Activated CD8-positive, alpha-beta T cell treated with anti-CD3 and anti-CD28 coated beads for 36 hours (primary cell): ENCODE measurements at regions of chr1 and their contacts with region 1.

Region 1: DNA sequence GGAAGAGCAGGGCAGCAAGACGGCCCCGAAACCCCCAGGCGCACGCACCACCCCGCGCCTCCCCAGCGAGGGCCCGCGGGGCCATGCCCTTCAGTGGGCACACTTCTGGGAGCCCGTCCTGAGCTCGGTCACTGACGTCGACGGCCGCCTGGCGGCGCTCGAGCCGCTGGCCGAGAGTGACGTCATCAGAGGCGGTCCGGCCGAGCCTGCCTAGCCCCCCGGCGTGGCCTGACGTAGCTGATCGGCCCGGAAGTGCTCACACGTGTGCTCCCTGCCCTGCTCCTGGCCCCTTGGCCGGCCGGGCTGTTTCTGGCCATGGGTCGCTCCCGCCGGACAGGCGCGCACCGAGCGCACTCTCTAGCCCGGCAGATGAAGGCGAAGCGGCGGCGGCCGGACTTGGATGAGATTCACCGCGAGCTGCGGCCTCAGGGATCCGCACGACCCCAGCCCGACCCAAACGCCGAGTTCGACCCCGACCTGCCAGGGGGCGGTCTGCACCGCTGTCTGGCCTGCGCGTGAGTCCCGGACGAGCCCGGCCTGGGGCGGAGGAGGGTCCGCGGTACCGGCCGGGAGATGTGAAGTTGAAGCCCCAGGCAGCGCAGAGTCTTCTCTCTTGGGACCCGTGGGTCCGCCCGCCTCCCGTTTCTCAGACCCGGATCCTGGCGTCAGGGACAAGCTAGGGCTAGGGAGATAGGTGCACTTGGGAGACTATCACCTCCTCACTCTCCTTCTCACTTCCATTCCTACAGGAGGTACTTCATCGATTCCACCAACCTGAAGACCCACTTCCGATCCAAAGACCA is at the start of gene ZNF593:
- DNase-seq: peak; percentile 92
- ATAC-seq: peak; percentile 97
- H3K4me3 Mint-ChIP-seq: peak within 1 kb of the TSS; percentile 91
- H3K27ac Mint-ChIP-seq: peak within 1 kb of the TSS; percentile 90
- H3K4me1 Mint-ChIP-seq: peaks cover 11% of the 10 kb centered on the region
- H3K27me3 Mint-ChIP-seq: peaks cover under 1% of the 10 kb centered on the region
- CTCF ChIP-seq: peak; percentile 84
- total RNA-seq, gene ZNF593: 40.9 to 41.1 TPM

Region 2: GRCh38 chr1:26021647-26022403 is 148.0 kb before region 1 on chr1 and contains the start of gene EXTL1:
- CTCF ChIA-PET with region 1: no interaction called
- POLR2A ChIA-PET with region 1: no interaction called
- intact Hi-C with region 1: no loop called
- DNase-seq: no peak
- ATAC-seq: no peak
- H3K4me3 Mint-ChIP-seq: no peak within 1 kb of the TSS
- H3K27ac Mint-ChIP-seq: no peak within 1 kb of the TSS
- H3K4me1 Mint-ChIP-seq: peaks cover 13% of the 10 kb centered on the region
- H3K27me3 Mint-ChIP-seq: no peaks in the 10 kb centered on the region
- CTCF ChIP-seq: no peak
- total RNA-seq, gene EXTL1: not detected

Region 3: DNA sequence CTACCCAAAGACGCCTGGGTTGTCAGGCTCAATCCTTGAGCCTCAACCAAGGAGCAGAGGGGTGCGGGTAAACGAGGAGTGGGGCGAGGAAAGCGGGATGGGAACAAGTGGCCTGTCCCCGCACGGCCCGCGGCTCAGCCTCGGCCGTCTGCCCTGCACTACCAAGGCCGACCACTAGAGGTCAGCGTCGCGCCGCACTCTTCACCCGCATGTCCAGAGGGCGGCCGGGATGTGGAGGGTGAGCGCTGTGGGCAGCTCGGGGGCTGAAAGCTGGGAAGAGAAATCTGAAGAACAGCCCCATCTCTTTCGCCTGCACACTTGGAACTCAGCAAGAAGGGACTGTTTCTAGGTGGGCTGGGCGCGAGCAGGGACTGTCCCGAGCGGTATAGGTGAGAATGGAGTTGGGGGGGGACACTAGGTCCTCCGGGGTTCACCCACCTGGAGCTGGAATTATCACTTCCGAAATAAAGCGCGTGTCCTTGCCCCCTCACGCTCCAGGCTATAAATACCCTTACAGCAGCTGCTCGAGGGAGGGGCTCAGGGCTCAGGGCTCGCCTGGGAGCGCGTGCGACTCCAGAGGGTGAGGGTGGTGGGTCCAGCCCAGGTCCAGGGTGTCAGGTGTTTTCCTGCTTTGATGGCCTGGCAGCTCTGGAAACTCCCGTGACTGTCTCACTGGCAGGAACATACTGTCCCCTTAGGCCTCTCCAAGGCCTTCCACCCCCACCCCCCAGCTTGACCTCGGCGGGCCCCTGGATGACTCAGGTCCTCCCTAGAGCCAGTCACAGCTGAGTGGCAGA is 133.7 kb before region 1 on chr1:
- CTCF ChIA-PET with region 1: interaction called, 17 read pairs
- POLR2A ChIA-PET with region 1: no interaction called
- intact Hi-C with region 1: no loop called
- DNase-seq: peak; percentile 81
- ATAC-seq: peak; percentile 77
- H3K4me3 Mint-ChIP-seq: peak overlapping the region; percentile 91
- H3K27ac Mint-ChIP-seq: peak overlapping the region; percentile 72
- H3K4me1 Mint-ChIP-seq: peaks cover 14% of the 10 kb centered on the region
- H3K27me3 Mint-ChIP-seq: no peaks in the 10 kb centered on the region
- CTCF ChIP-seq: peak; percentile 100

Region 4: DNA sequence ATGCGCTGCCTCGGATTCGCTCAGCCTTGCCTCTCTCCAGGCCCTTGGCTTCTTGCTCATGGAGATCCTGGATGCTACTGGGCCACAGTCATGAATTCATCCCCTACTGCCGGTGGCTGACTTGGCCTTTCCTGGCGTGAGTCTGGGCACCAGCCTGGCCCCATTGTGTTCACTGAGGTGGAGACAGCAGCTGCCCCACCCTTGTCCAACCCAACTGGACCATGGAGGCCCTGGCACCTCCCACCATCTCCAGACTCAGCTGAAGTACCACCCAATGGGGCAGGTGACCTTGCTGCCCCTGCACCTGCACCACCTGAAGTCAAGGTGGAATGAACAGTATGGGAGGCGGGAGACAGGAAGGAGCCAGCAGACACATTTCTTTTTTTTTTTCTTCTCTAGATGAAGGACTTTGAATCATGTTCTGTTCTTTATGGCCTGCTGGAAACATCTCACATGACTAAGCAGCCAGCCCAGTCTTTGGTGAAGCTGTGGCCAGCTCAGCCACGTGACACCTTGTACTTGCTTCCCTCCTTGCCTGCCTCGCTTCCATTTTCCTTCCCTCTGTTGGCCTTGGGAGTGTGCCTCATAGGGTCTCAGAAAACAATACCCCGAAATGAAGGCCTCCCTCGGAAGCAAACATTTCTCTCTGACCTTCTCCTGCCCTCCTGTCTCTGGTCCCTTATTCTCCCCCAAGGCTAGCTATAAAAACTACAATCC is 120.2 kb before region 1 on chr1:
- CTCF ChIA-PET with region 1: no interaction called
- POLR2A ChIA-PET with region 1: no interaction called
- intact Hi-C with region 1: no loop called
- DNase-seq: no peak
- ATAC-seq: no peak
- H3K4me3 Mint-ChIP-seq: no peak overlapping the region
- H3K27ac Mint-ChIP-seq: no peak overlapping the region
- H3K4me1 Mint-ChIP-seq: peaks cover 2% of the 10 kb centered on the region
- H3K27me3 Mint-ChIP-seq: peaks cover 56% of the 10 kb centered on the region
- CTCF ChIP-seq: no peak

Region 5: GRCh38 chr1:26180010-26180506 is 10.2 kb after region 1 on chr1:
- CTCF ChIA-PET with region 1: interaction called, 23 read pairs
- POLR2A ChIA-PET with region 1: interaction called, 3 read pairs
- intact Hi-C with region 1: no loop called
- DNase-seq: no peak
- ATAC-seq: no peak
- H3K4me3 Mint-ChIP-seq: no peak overlapping the region
- H3K27ac Mint-ChIP-seq: no peak overlapping the region
- H3K4me1 Mint-ChIP-seq: no peaks in the 10 kb centered on the region
- H3K27me3 Mint-ChIP-seq: no peaks in the 10 kb centered on the region
- CTCF ChIP-seq: no peak

Region 6: DNA sequence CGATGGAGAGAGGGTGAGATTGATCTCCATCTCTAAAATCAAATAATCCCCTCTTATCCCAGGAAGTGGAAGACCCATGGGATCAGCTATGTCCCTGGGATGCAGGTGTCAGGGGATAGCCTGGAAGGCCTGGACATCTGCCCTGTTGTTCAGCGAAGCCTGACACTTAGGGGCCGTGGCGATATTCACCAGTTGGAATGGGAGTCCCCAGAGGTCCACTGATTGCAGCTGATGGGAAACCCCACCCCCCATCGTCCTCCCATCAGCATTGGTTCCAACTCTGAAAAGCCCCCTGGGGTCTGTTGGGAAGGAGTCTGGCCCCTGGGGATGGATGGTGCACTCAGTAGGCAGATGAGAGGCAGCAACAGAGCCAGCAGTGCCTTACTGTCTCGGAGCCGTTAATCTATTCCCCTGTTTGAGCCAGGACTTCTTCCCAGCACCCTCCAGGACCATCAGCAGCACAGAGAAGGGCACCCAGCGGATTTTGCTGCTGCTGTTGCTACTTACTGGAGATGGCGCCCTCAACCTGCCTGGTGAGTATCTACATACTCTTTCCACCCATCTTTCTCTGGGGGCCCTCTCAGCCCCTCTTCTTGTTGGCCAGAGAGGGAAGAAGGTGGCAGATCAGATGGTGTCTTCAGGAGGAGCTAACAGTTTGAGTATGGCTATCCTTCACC is 33.9 kb after region 1 on chr1:
- CTCF ChIA-PET with region 1: interaction called, 11 read pairs
- POLR2A ChIA-PET with region 1: interaction called, 3 read pairs
- intact Hi-C with region 1: no loop called
- DNase-seq: peak; percentile 25
- ATAC-seq: no peak
- H3K4me3 Mint-ChIP-seq: no peak overlapping the region
- H3K27ac Mint-ChIP-seq: no peak overlapping the region
- H3K4me1 Mint-ChIP-seq: peaks cover 14% of the 10 kb centered on the region
- H3K27me3 Mint-ChIP-seq: no peaks in the 10 kb centered on the region
- CTCF ChIP-seq: no peak

Region 7: DNA sequence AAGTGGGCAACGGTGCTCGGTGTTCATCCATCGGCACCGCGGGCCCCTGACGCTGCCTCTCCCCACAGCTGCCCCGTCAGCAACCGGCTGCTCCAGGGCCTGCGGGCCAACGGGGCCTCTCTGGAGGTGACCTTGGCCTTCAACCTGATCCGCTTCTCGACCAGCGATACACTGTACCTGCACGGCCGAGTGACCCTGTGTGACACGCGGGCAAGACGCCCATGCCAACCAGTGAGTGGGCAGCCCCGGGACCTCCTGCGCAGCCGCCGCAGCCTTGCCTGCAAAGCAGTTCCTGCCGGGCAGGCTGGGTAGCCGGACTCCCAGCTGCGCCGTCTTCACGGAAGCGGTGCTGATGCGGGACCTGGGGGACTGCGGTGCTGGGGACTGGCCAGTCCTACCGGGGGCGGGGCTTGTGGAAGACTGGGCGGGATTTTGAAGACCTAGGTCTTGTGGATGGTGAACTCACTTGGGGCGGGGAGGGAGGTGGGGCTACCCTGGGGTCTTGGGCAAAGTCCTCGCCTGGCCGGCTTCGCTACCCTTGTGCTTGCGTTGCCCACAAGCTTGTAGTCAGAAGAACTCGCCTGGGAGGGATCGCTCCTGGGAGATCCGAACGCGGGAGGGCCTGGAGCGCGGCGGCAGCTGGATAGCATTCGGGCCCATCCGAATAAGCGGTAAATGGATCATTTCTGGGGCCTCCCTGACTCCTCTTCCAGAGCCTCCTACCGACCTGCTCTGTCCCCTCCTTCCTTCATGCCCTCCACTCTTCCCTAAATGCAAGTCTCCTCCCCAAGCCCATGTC is 55.4 kb after region 1 on chr1:
- CTCF ChIA-PET with region 1: interaction called, 10 read pairs
- POLR2A ChIA-PET with region 1: interaction called, 4 read pairs
- intact Hi-C with region 1: no loop called
- DNase-seq: peak; percentile 68
- ATAC-seq: peak; percentile 89
- H3K4me3 Mint-ChIP-seq: peak overlapping the region; percentile 59
- H3K27ac Mint-ChIP-seq: no peak overlapping the region
- H3K4me1 Mint-ChIP-seq: peaks cover 5% of the 10 kb centered on the region
- H3K27me3 Mint-ChIP-seq: peaks cover 21% of the 10 kb centered on the region
- CTCF ChIP-seq: no peak

Region 8: DNA sequence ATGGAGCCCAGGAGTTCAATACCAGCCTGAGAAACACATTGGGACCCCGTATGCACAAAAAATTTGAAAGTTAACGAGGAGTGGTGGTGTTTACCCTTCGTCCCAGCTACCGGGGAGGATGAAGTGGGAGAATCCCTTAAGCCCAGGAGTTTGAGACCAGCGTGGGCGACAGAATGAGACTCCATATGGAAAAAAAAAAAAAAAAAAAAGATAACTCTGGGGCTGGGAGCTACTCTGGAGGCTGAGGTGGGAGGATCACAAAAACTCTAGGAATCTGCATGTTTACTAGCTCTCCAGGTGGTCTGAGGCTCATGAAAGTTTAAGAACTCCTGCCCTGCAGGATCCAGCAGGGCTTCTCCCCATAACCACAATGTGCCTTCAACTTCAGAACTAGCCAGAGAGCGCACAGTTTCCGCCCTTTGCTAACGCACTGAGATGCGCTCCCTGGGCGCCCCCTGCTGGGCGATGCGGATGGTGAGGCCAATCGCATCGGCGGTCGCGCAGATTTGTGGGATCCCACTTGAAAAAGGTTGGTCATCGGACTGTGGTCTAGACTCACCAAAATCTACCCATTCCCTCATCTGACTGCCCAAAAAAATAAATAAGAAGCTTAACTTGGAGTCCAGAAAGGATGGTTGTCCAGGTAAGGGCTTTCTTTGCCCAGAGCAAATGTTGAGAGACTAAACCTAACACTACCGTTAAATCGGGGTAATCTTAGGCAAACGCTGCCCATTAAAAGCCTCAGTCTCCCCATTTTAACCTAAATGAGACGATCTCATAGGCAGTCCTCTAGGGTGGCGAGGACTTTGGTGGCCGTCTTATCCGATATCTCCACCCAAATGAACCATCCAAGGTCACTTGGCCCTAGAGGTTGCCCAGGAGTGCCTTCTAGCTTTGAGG is 193.9 kb after region 1 on chr1:
- CTCF ChIA-PET with region 1: interaction called, 10 read pairs
- POLR2A ChIA-PET with region 1: no interaction called
- intact Hi-C with region 1: no loop called
- DNase-seq: peak; percentile 94
- ATAC-seq: peak; percentile 70
- H3K4me3 Mint-ChIP-seq: no peak overlapping the region
- H3K27ac Mint-ChIP-seq: no peak overlapping the region
- H3K4me1 Mint-ChIP-seq: peaks cover 43% of the 10 kb centered on the region
- H3K27me3 Mint-ChIP-seq: peaks cover 17% of the 10 kb centered on the region
- CTCF ChIP-seq: peak; percentile 98

Region 9: GRCh38 chr1:26408604-26409003 is 238.7 kb after region 1 on chr1:
- CTCF ChIA-PET with region 1: no interaction called
- POLR2A ChIA-PET with region 1: no interaction called
- intact Hi-C with region 1: no loop called
- DNase-seq: peak; percentile 78
- ATAC-seq: peak; percentile 92
- H3K4me3 Mint-ChIP-seq: no peak overlapping the region
- H3K27ac Mint-ChIP-seq: no peak overlapping the region
- H3K4me1 Mint-ChIP-seq: peaks cover 23% of the 10 kb centered on the region
- H3K27me3 Mint-ChIP-seq: peaks cover 54% of the 10 kb centered on the region
- CTCF ChIP-seq: no peak